ENCODE measurements at regions of chr10 and their contacts with region 1.

Region 1: DNA sequence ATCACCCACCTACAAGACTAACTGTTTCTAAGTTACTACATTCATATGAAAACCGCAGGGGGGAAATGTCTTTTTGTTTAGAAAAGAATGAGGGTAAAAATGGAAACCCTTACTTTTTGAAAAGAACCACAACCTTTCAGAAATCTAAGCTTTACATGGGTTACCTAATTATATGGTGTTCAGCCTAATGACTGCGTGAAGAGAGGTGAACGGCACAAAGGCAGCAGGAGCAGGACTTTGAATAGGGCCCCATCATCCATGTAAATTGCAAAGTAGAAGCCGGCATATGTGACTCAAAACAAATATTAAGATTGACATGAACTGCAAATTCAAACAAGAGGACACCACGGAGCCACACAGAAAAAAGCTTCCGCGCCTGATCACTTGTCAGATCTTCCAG is 25.1 kb downstream of the NEBL start:
- DNase-seq: no peak
- ATAC-seq: peak in 2 of 8 donors; percentile 29 to 34
- H3K4me3 ChIP-seq: no peak overlapping the region
- H3K27ac ChIP-seq: no peak overlapping the region
- H3K4me1 ChIP-seq: peaks cover 0 to 52% (median 5%) of the 10 kb centered on the region in 9 donors
- H3K27me3 ChIP-seq: no peaks in the 10 kb centered on the region
- CTCF ChIP-seq: no peak

Region 2: DNA sequence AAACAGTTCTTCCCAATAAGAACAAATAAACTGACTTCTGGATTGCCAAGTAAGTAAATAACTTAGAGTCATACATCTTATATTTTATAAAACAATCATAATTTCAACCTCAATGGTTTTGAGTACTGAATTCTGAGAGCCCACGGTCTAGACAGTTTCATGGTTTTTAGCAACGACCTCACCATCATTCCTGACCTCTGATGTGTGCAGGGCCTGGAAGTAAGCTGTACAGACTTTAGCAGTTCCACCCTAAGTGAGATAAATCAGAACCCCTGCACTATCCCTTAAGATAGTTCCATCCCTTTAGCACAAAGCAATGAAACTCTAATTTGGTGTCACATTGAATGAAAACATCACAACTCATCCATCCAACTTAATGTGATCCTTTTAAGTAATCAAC is 60.8 kb before region 1 on chr10:
- intact Hi-C with region 1: no loop called
- DNase-seq: no peak
- ATAC-seq: no peak
- H3K4me3 ChIP-seq: no peak overlapping the region
- H3K27ac ChIP-seq: no peak overlapping the region
- H3K4me1 ChIP-seq: peaks cover 0 to 29% (median 3%) of the 10 kb centered on the region in 9 donors
- H3K27me3 ChIP-seq: no peaks in the 10 kb centered on the region
- CTCF ChIP-seq: no peak

Region 3: GRCh38 chr10:20839904-20840303 is 32.1 kb before region 1 on chr10:
- intact Hi-C with region 1: loop called in 1 of 10 experiments (anchors 2 kb)
- DNase-seq: no peak
- ATAC-seq: no peak
- H3K4me3 ChIP-seq: no peak overlapping the region
- H3K27ac ChIP-seq: no peak overlapping the region
- H3K4me1 ChIP-seq: peaks cover 0 to 24% (median 6%) of the 10 kb centered on the region in 9 donors
- H3K27me3 ChIP-seq: no peaks in the 10 kb centered on the region
- CTCF ChIP-seq: no peak